CD8-positive, alpha-beta T cell (primary cell): ENCODE measurements at regions of chr15 and their contacts with region 1.

Region 1: GRCh38 chr15:51829360-51830275 is at the start of gene TMOD3:
- DNase-seq: peak; percentile 74 to 94 (median 90)
- ATAC-seq: peak; percentile 83
- H3K4me3 ChIP-seq: peak within 1 kb of the TSS; percentile 64 to 83
- H3K4me3 Mint-ChIP-seq: peak within 1 kb of the TSS; percentile 99
- H3K27ac ChIP-seq: peak within 1 kb of the TSS; percentile 66 to 74
- H3K27ac Mint-ChIP-seq: peak within 1 kb of the TSS; percentile 95
- H3K4me1 ChIP-seq: peaks cover 38% of the 10 kb centered on the region
- H3K4me1 Mint-ChIP-seq: peaks cover 42% of the 10 kb centered on the region
- H3K27me3 ChIP-seq: no peaks in the 10 kb centered on the region
- H3K27me3 Mint-ChIP-seq: no peaks in the 10 kb centered on the region
- CTCF ChIP-seq: no peak
- total RNA-seq, gene TMOD3: 32.7 to 32.9 TPM

Region 2: GRCh38 chr15:51750792-51751685 is 78.6 kb before region 1 on chr15 and contains the start of gene TMOD2:
- CTCF ChIA-PET with region 1: no interaction called
- POLR2A ChIA-PET with region 1: no interaction called
- intact Hi-C with region 1: loop called in 1 of 2 experiments (anchors 5 kb)
- DNase-seq: peak in 7 of 9 experiments; percentile 38 to 75 (median 52)
- ATAC-seq: peak; percentile 88
- H3K4me3 ChIP-seq: peak within 1 kb of the TSS; percentile 63 to 64
- H3K4me3 Mint-ChIP-seq: peak within 1 kb of the TSS; percentile 89
- H3K27ac ChIP-seq: peak within 1 kb of the TSS in 1 of 2 experiments; percentile 7
- H3K27ac Mint-ChIP-seq: peak within 1 kb of the TSS; percentile 74
- H3K4me1 ChIP-seq: peaks cover 13% of the 10 kb centered on the region
- H3K4me1 Mint-ChIP-seq: peaks cover 46% of the 10 kb centered on the region
- H3K27me3 ChIP-seq: peaks cover 0 to 2% of the 10 kb centered on the region in 2 experiments
- H3K27me3 Mint-ChIP-seq: no peaks in the 10 kb centered on the region
- CTCF ChIP-seq: no peak
- total RNA-seq, gene TMOD2: 5.1 to 5.3 TPM

Region 3: DNA sequence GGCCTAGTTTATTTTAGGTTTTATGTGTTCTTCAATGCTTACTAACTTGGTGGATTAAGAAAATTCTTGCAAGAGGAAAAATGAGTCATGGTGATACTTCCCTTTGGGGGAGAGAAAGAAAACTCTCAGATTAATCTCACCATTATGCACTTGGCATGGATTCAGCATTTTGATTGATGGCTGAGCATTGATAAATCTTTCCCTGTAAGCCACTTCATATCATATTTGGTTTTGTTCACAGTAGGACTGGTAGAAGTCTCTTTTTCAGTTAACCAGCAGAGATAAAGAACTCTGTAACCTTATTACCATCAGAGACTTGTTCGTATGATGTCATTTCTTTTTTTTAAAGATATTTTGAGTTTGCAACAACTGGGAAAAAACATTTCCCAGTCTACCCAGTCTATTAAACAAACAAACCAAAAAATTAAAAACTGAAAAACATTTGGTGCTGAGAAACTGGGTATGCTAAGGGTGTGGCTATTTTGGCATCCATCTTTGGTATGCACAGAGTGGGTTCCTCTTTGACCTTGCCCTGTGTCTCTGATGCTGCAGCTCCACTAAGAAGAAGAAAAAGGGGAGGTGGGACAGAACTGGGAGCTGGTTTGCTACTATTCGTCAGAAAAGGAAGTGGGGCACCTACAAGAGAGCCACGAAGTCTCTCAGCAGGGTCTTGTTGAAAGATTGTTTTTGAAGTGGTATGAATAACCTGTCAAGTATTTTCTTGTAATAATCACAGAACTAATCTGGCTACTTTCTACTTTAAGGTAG is 17.0 kb after region 1 on chr15:
- CTCF ChIA-PET with region 1: no interaction called
- POLR2A ChIA-PET with region 1: interaction called, 4 read pairs
- intact Hi-C with region 1: loop called (anchors 2 kb)
- DNase-seq: peak in 3 of 9 experiments; percentile 6 to 28 (median 10)
- ATAC-seq: peak; percentile 65
- H3K4me3 ChIP-seq: no peak overlapping the region
- H3K4me3 Mint-ChIP-seq: peak overlapping the region; percentile 16
- H3K27ac ChIP-seq: no peak overlapping the region
- H3K27ac Mint-ChIP-seq: peak overlapping the region; percentile 37
- H3K4me1 ChIP-seq: peaks cover 36% of the 10 kb centered on the region
- H3K4me1 Mint-ChIP-seq: peaks cover 79% of the 10 kb centered on the region
- H3K27me3 ChIP-seq: no peaks in the 10 kb centered on the region
- H3K27me3 Mint-ChIP-seq: no peaks in the 10 kb centered on the region
- CTCF ChIP-seq: no peak

Region 4: DNA sequence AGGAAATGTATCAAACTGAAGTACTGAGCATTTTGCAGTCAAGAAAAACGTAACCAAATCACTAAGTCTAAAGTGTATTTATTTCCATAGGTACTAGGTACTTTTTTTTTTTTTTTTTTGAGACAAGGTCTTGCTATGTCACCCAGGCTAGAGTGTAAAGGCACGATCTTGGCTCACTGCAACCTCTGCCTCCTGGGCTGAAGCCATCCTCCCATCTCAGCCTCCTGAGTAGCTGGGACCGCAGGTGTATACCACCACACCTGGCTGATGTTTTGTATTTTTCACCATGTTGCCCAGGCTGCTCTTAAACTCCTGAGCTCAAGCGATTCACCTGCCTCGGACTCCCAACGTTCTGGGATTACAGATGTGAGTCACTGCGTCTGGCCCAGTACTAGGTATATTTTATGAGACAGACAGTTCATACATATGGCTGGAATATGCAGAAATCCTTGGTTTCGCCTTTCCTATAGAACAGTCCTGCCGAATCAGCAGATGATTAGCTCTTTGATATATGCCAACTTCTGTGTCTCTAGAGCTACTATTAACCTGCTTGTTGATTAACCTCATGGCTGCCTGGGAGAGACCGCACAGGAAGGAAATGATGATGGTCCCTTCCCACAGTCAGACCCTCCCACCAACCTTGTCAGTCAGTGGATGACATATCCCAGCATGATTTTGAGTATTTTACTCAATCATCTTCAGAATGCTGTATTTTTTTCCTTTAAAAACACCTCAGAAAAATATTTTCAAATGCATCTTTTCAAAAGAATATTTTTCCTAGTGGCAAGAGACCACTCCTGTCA is 32.1 kb after region 1 on chr15:
- CTCF ChIA-PET with region 1: no interaction called
- POLR2A ChIA-PET with region 1: no interaction called
- intact Hi-C with region 1: loop called in 1 of 2 experiments (anchors 1 kb)
- DNase-seq: peak; percentile 29 to 83 (median 64)
- ATAC-seq: peak; percentile 99
- H3K4me3 ChIP-seq: peak overlapping the region in 1 of 2 experiments; percentile 16
- H3K4me3 Mint-ChIP-seq: peak overlapping the region; percentile 68
- H3K27ac ChIP-seq: peak overlapping the region in 1 of 2 experiments; percentile 32
- H3K27ac Mint-ChIP-seq: peak overlapping the region; percentile 79
- H3K4me1 ChIP-seq: peaks cover 25% of the 10 kb centered on the region
- H3K4me1 Mint-ChIP-seq: peaks cover 56% of the 10 kb centered on the region
- H3K27me3 ChIP-seq: no peaks in the 10 kb centered on the region
- H3K27me3 Mint-ChIP-seq: no peaks in the 10 kb centered on the region
- CTCF ChIP-seq: no peak

Region 5: GRCh38 chr15:51971375-51972133 is 141.9 kb after region 1 on chr15 and contains the start of gene LEO1:
- CTCF ChIA-PET with region 1: no interaction called
- POLR2A ChIA-PET with region 1: no interaction called
- intact Hi-C with region 1: loop called (anchors 1 to 10 kb)
- DNase-seq: peak; percentile 72 to 97 (median 88)
- ATAC-seq: peak; percentile 91
- H3K4me3 ChIP-seq: peak within 1 kb of the TSS; percentile 85 to 99
- H3K4me3 Mint-ChIP-seq: peak within 1 kb of the TSS; percentile 99
- H3K27ac ChIP-seq: peak within 1 kb of the TSS; percentile 69 to 87
- H3K27ac Mint-ChIP-seq: peak within 1 kb of the TSS; percentile 99
- H3K4me1 ChIP-seq: peaks cover 13% of the 10 kb centered on the region
- H3K4me1 Mint-ChIP-seq: peaks cover 21% of the 10 kb centered on the region
- H3K27me3 ChIP-seq: no peaks in the 10 kb centered on the region
- H3K27me3 Mint-ChIP-seq: no peaks in the 10 kb centered on the region
- CTCF ChIP-seq: peak; percentile 26
- total RNA-seq, gene LEO1: 9.4 TPM